ENCODE measurements at regions of chr19 and their contacts with region 1.

Region 1: DNA sequence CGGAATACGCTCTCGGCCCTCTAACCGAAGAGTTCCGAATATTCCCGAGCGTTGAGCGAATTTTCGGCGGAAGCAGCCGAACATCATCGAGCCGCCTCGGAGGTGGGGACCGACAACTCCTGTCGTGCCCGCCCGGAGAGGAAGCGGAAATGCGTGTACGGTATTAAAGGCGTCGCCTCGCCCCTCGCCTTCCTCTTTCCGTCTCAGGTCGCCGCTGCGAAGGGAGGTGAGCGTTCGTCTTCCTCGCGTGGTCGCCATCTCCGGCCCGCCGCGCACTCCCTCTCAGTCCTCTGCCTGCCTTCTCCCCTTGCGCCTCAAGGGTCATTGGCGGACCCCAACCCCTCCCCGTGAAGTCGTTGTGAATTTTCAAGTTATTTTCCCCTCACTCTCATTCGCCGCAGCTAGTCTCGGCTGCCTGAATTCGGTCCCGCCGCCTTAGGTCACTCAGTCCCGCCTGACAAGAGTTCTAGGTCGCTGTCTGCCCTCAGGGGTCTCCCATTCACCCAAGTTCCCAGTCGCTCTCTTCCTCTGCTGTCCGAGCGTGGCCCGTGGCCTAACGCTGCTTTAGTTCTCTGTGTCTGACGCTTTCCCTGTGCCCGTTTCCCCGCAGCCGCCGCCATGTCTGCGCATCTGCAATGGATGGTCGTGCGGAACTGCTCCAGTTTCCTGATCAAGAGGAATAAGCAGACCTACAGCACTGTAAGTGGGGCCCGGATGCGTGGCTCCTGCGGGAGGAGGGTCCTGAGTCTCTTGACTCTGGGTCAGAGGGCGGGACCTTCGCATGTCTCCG is at the start of gene RPL28:
- DNase-seq: peak; percentile 93
- ATAC-seq: peak; percentile 80
- H3K4me3 ChIP-seq: peak within 1 kb of the TSS; percentile 94
- H3K27ac ChIP-seq: peak within 1 kb of the TSS; percentile 90
- H3K4me1 ChIP-seq: peaks cover 28% of the 10 kb centered on the region
- H3K27me3 ChIP-seq: no peaks in the 10 kb centered on the region
- CTCF ChIP-seq: no peak
- EP300 ChIP-seq: no peak
- POLR2A ChIP-seq: peak; percentile 100
- RAD21 ChIP-seq: no peak
- polyA plus RNA-seq, gene RPL28: 290 to 479 TPM

Region 2: GRCh38 chr19:55289117-55289796 is 96.7 kb before region 1 on chr19:
- CTCF ChIA-PET with region 1: interaction called, 34 read pairs
- POLR2A ChIA-PET with region 1: interaction called, 5 read pairs
- RAD21 ChIA-PET with region 1: interaction called, 4 read pairs
- SMC1A ChIA-PET with region 1: no interaction called
- in situ Hi-C with region 1: no loop called
- intact Hi-C with region 1: no loop called
- DNase-seq: no peak
- ATAC-seq: no peak
- H3K4me3 ChIP-seq: no peak overlapping the region
- H3K27ac ChIP-seq: no peak overlapping the region
- H3K4me1 ChIP-seq: no peaks in the 10 kb centered on the region
- H3K27me3 ChIP-seq: no peaks in the 10 kb centered on the region
- CTCF ChIP-seq: no peak
- EP300 ChIP-seq: no peak
- POLR2A ChIP-seq: no peak
- RAD21 ChIP-seq: no peak

Region 3: DNA sequence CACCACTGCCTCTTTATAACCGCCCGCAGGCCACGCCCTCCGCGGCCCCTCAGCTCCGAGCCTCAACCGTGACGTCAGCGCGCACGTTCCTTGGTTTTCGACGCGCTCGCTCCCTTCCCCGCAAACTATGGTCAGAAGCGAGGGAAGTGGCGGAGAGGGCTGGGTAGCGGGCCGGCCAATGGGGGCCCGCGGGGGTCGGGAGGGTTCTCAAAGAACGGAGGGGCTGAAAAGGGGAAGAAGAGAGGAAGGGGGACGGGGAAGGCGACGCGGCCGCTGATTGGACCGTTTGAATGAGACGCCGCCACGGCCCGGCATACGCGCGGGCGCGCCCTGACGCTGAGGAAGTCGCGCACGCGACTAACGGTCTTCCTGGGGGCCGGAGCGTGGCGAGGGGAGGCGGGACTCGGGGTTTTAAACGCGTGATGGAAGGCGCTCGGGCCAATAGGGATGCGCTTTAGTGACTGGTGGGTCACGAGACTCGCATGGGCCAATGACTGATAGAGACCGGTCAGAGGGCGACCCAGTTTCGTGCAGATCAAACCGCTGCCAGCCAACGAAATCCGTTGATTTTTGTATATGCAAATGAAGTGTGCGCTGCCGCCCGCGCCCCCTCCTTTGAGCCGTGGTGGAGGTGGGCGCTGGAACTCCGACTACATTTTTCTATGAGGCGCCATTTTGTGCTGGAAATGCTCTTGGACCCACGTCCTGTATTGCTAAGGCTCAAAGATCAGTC is 22.0 kb after region 1 on chr19:
- CTCF ChIA-PET with region 1: interaction called, 3 read pairs
- POLR2A ChIA-PET with region 1: interaction called, 21 read pairs
- RAD21 ChIA-PET with region 1: interaction called, 14 read pairs
- SMC1A ChIA-PET with region 1: interaction called, 3 read pairs
- in situ Hi-C with region 1: no loop called
- intact Hi-C with region 1: no loop called
- DNase-seq: peak; percentile 97
- ATAC-seq: peak; percentile 96
- H3K4me3 ChIP-seq: peak overlapping the region; percentile 93
- H3K27ac ChIP-seq: peak overlapping the region; percentile 98
- H3K4me1 ChIP-seq: peaks cover 20% of the 10 kb centered on the region
- H3K27me3 ChIP-seq: no peaks in the 10 kb centered on the region
- CTCF ChIP-seq: no peak
- EP300 ChIP-seq: 0 out of 4 replicates have a peak, but pooled peaks of 1 of the 2 experiments have one; percentile 39
- POLR2A ChIP-seq: peak; percentile 39; the same call in 1 of the 2 replicates
- RAD21 ChIP-seq: no peak